HCT116 (cell line): ENCODE measurements at regions of chr5 and their contacts with region 1.

Region 1: DNA sequence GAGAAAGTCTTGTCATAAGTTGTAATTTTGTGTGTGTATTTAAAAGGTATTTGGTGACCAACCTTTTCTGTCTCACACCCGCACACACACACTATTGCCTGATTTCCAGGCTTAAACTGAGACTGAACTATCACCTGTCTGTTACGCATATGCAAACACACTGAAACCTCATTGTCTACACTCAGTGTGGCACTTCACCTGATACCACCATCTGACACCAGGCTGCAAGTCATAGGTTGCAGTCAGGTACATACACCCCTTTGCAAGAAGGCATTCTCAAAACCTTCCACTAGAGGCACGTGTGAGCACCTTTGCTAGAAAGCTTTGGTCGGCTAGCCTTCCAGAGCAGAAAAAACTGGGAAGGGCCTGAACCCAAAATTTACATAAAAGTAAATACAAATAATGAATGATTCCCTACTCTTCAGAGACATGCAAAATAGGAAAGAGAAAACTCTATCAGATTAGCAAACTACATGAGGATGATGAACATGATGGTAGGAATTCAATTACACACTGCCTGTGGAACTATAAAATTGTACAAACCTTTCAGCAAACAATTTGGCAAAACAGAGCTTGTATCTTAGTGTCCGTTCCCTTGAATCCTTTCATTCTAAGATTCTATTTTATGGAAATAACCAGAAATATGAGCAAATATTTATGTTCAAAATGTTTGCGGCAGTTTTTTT is 5.9 kb upstream of the FOXD1 start:
- DNase-seq: peak; percentile 86
- ATAC-seq: peak; percentile 90
- H3K4me3 ChIP-seq: no peak overlapping the region
- H3K27ac ChIP-seq: no peak overlapping the region
- H3K4me1 ChIP-seq: peaks cover 0 to 20% of the 10 kb centered on the region in 2 experiments; a peak in 2 of 4 replicates
- H3K27me3 ChIP-seq: no peaks in the 10 kb centered on the region
- CTCF ChIP-seq: peak; percentile 51 to 89 (median 78); a peak in 5 of 6 replicates
- POLR2A ChIP-seq: no peak
- RAD21 ChIP-seq: peak; percentile 48

Region 2: GRCh38 chr5:72955768-72956323 is 498.6 kb before region 1 on chr5 and contains the start of gene FCHO2:
- CTCF ChIA-PET with region 1: no interaction called
- POLR2A ChIA-PET with region 1: no interaction called
- RAD21 ChIA-PET with region 1: no interaction called
- intact Hi-C with region 1: loop called (anchors 10 kb)
- DNase-seq: peak; percentile 94
- ATAC-seq: peak; percentile 87
- H3K4me3 ChIP-seq: peak within 1 kb of the TSS; percentile 61 to 77
- H3K27ac ChIP-seq: peak within 1 kb of the TSS; percentile 92
- H3K4me1 ChIP-seq: peaks cover 22 to 55% of the 10 kb centered on the region in 2 experiments
- H3K27me3 ChIP-seq: no peaks in the 10 kb centered on the region
- CTCF ChIP-seq: peak; percentile 50 to 77 (median 72); a peak in 5 of 6 replicates
- POLR2A ChIP-seq: peak; percentile 70
- RAD21 ChIP-seq: peak; percentile 80
- total RNA-seq, gene FCHO2: 18.7 TPM

Region 3: DNA sequence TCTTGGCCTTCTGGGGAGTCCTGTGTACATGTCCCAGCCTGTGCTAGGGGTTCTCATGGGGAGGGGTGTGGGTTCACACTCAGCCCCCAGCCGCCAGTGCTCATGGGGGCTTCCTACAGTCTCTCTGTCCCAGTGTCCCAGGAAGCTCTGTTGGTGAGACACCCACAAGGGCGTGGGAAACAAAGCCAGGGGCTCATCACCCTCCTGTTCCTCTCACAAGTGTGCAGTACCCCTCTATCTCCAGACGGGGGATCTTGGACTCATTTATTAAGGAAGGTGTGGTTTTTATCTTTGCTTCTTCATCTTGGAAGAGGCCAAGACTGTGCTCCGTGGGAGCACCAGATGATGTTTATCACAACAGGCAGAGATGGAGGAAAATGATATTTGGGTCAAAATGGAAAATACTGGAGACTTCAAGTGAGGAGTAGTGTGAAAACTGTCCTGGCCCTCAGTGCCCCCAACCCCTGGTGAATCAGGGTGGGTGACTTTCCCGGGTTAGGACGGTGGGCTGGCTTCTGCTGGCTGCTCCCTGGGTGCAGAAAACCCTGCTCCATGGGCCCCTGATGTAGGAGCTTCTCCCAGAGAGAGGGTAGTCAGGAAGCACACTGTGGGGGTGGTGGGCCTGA is 319.0 kb before region 1 on chr5:
- CTCF ChIA-PET with region 1: no interaction called
- POLR2A ChIA-PET with region 1: no interaction called
- RAD21 ChIA-PET with region 1: no interaction called
- intact Hi-C with region 1: loop called (anchors 5 kb)
- DNase-seq: peak; percentile 31
- ATAC-seq: peak; percentile 93
- H3K4me3 ChIP-seq: no peak overlapping the region
- H3K27ac ChIP-seq: no peak overlapping the region
- H3K4me1 ChIP-seq: no peaks in the 10 kb centered on the region
- H3K27me3 ChIP-seq: no peaks in the 10 kb centered on the region
- CTCF ChIP-seq: peak; percentile 36 to 62 (median 57); a peak in 5 of 6 replicates
- POLR2A ChIP-seq: no peak
- RAD21 ChIP-seq: peak; percentile 50

Region 4: DNA sequence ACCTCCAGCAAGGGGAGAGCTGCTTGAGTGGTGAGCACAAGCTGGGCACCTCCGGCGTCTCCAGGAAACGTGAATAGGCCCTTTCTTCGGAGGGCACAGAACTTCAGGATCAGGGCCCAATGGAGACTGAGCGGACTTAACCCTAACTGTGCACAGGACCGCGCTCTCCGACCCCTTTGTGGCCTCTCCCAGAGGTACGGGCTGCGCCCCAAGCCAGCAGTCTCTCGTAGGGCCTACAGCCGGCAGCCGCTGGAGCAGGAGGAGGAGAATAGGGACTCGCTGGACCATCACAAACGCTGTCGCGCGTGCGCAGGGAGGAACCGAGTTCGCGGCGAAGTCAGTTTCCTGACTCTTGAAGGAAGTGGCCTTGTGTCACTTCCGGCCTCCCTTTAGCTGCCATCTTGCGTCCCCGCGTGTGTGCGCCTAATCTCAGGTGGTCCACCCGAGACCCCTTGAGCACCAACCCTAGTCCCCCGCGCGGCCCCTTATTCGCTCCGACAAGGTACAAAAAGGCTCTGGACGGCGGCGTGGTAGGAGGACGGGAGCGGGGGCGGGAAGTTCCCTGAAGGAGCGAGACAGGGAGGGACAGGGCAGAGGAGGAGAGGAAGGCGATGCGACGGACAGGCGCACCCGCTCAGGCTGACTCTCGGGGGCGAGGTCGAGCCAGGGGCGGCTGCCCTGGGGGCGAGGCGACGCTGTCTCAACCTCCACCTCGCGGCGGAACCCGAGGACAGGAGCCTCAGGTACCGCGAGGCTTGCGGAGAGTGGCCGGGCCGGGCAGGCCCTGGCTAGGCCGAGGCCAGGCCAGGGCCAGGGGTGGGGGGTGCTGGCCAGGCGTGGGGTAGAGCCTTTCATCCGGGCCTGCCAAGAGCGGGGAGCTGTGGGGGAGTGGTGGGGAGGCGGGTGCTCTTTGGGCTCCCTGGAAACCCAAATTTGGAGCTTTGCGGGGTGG is 43.8 kb after region 1 on chr5 and contains the start of gene BTF3:
- CTCF ChIA-PET with region 1: interaction called, 13 read pairs
- POLR2A ChIA-PET with region 1: no interaction called
- RAD21 ChIA-PET with region 1: no interaction called
- intact Hi-C with region 1: loop called (anchors 2 kb)
- DNase-seq: peak; percentile 92
- ATAC-seq: peak; percentile 93
- H3K4me3 ChIP-seq: peak within 1 kb of the TSS; percentile 90 to 95
- H3K27ac ChIP-seq: peak within 1 kb of the TSS; percentile 91
- H3K4me1 ChIP-seq: peaks cover 10 to 26% of the 10 kb centered on the region in 2 experiments
- H3K27me3 ChIP-seq: no peaks in the 10 kb centered on the region
- CTCF ChIP-seq: no peak
- POLR2A ChIP-seq: peak; percentile 80
- RAD21 ChIP-seq: no peak
- total RNA-seq, gene BTF3: 868 TPM

Region 5: GRCh38 chr5:73540192-73540591 is 85.7 kb after region 1 on chr5:
- CTCF ChIA-PET with region 1: no interaction called
- POLR2A ChIA-PET with region 1: no interaction called
- RAD21 ChIA-PET with region 1: interaction called in 1 of 2 experiments, 3 read pairs
- intact Hi-C with region 1: loop called (anchors 1 kb)
- DNase-seq: no peak
- ATAC-seq: no peak
- H3K4me3 ChIP-seq: no peak overlapping the region
- H3K27ac ChIP-seq: no peak overlapping the region
- H3K4me1 ChIP-seq: peaks cover 0 to 4% of the 10 kb centered on the region in 2 experiments; a peak in 1 of 4 replicates
- H3K27me3 ChIP-seq: no peaks in the 10 kb centered on the region
- CTCF ChIP-seq: no peak
- POLR2A ChIP-seq: no peak
- RAD21 ChIP-seq: no peak